Cardiac septum (tissue), 1 donor: ENCODE measurements at regions of chrX and their contacts with region 1.

Region 1: DNA sequence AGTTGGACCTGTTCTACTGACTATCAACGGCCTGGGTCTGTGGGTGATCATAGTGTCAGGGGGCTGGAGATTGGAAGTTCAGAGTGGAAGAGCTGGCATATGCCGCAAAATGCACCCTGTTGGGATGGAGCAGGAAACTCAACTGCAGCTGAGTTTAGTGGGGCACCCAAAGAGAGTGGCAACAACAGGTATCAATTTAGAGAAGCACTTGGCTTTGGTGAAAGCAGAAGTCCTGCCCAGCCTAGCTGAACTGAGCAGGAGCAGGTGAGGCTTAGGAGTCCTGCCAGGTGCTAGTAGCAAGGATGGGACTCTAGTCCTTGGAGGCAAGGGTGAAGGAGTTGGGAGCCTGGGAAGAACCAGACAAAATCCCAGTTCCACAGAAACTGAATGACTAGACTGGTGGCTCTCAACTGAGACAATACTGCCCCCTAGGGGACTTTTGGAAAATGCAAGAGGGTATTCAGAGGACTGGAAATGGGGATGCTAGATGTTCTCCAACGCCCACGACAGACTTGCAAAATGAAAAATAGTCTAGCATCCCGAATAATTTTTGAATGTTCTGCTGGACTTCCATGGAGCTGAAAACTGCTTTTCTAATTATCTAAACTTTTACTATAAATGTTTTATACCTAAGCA is 49.4 kb downstream of the RTL9 start:
- DNase-seq: no peak

Region 2: DNA sequence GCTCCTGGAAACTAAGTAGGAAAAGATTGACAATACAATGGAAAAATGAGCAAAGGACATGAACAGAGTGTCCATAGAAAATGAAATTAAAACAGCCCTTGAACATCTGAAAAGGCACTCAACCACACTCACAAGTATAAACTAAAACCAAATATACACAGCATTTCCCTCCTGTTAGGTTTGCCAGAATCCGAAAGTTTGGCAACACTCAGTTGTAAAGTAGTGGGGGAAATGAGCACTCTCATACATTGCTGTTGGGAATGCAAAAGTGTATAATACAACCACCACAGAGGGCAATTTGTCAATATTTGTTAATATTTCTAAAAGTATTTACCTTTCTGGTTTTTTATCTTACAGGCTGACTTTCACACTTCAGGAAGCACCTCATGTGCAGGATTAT is 489.3 kb before region 1 on chrX:
- intact Hi-C with region 1: loop called (anchors 5 kb)
- DNase-seq: no peak

Region 3: DNA sequence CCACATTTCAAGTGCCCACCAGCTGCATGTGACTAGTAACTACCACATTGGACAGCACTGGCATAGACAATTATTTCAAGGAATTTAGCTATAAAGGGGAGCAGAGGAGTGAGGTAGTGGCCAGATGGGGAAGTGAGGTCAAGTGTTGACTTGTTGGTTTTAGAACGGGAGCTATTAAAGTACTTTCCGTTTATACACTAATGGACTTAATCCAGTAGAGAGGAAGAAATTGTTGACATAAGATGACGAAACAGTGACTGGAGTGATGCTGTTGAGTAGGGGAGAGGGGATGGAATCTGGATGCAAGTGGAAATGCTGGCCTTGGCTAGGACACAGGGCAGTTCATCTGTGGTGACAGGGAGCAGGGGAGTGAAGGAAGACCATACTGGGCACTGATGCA is 244.5 kb before region 1 on chrX:
- intact Hi-C with region 1: loop called (anchors 2 kb)
- DNase-seq: no peak